ENCODE measurements at regions of chr5 and their contacts with region 1.

Region 1: GRCh38 chr5:65481635-65482295 is at the start of gene ADAMTS6:
- DNase-seq: peak in 1 of 2 experiments; percentile 67
- H3K4me3 ChIP-seq: peak within 1 kb of the TSS; percentile 50 to 79 (median 60)
- H3K27ac ChIP-seq: peak within 1 kb of the TSS; percentile 84
- H3K4me1 ChIP-seq: peaks cover 0 to 11% (median 6%) of the 10 kb centered on the region in 4 experiments; a peak in 4 of 7 replicates
- H3K27me3 ChIP-seq: no peaks in the 10 kb centered on the region
- CTCF ChIP-seq: no peak
- EP300 ChIP-seq: no peak
- POLR2A ChIP-seq: peak in 1 of 2 experiments; percentile 69; a peak in 2 of 3 replicates
- RAD21 ChIP-seq: peak in 1 of 2 experiments; percentile 10; a peak in 1 of 4 replicates
- total RNA-seq, gene ADAMTS6: 1.7 and 2.4 TPM in 2 replicates

Region 2: DNA sequence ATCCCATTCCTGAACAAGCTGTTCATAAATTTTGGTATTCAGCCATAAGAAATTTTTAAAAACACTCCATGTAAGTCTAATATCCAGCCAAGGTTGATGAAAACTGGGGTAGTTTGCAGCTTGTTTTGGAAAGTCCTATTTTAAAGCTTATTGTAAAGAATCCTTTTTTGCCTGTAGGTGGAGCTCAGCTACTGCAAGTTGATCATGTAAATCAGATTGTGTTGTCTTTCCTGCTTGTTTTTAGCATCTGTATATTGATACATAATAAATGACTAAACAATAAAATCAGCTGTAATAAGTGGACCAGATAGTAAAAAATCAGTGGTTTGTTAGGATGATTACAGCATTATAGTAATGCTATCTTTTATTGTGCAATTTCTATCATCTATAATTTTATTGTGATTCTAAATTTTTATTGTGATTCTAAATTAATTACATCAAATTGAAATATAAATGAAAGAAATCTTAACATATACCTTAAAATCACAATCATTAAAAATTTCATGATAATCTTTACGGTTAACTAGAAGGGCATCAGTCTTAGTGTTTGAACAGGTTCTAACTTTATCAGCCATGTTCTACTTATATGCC is 670.6 kb before region 1 on chr5:
- CTCF ChIA-PET with region 1: interaction called, 13 read pairs
- POLR2A ChIA-PET with region 1: no interaction called
- DNase-seq: no peak
- H3K4me3 ChIP-seq: no peak overlapping the region
- H3K27ac ChIP-seq: no peak overlapping the region
- H3K4me1 ChIP-seq: no peaks in the 10 kb centered on the region
- H3K27me3 ChIP-seq: no peaks in the 10 kb centered on the region
- CTCF ChIP-seq: peak in 2 of 3 experiments; percentile 45 to 59; a peak in 2 of 4 replicates
- EP300 ChIP-seq: no peak
- POLR2A ChIP-seq: no peak
- RAD21 ChIP-seq: peak; percentile 82 to 85

Region 3: DNA sequence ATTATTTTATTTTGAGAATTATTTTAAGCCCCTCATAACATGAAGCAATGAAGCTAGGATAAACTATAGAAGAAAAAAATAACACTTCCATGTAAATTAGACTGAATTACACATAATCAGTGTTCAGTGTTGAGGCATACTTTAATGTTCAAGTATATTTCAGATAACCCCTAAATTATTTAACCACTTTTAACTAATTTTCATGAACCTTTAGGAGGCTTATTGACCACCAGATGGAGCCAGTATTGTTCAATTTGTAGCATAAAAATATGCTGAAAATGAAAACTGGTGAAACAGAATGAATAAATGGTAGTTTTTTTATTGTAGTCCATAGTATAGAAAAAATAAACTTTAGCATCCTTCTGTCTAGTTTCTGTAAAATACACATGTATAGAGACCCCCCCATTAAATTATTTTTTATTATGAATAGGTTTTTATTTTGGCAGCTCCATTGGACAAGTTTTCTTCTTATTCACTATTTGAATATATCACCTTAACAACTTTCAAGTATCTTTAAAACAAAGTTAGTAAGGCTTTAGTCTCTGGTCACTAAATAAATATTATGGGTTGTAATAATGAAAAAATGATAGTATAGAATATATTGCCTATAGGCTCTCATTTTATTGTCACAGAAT is 522.9 kb before region 1 on chr5:
- CTCF ChIA-PET with region 1: interaction called, 14 read pairs
- POLR2A ChIA-PET with region 1: no interaction called
- DNase-seq: no peak
- H3K4me3 ChIP-seq: no peak overlapping the region
- H3K27ac ChIP-seq: no peak overlapping the region
- H3K4me1 ChIP-seq: no peaks in the 10 kb centered on the region
- H3K27me3 ChIP-seq: no peaks in the 10 kb centered on the region
- CTCF ChIP-seq: peak in 1 of 3 experiments; percentile 20; a peak in 2 of 4 replicates
- EP300 ChIP-seq: no peak
- POLR2A ChIP-seq: no peak
- RAD21 ChIP-seq: peak in 1 of 2 experiments; percentile 36; a peak in 2 of 4 replicates

Region 4: GRCh38 chr5:65035211-65036206 is 446.3 kb before region 1 on chr5:
- CTCF ChIA-PET with region 1: interaction called, 14 read pairs
- POLR2A ChIA-PET with region 1: no interaction called
- DNase-seq: peak; percentile 81 to 93
- H3K4me3 ChIP-seq: peak overlapping the region; percentile 57 to 67 (median 63)
- H3K27ac ChIP-seq: peak overlapping the region; percentile 90
- H3K4me1 ChIP-seq: peaks cover 2 to 10% (median 4%) of the 10 kb centered on the region in 4 experiments
- H3K27me3 ChIP-seq: peaks cover 0 to 3% (median 0%) of the 10 kb centered on the region in 4 experiments; a peak in 2 of 7 replicates
- CTCF ChIP-seq: no peak
- EP300 ChIP-seq: 0 out of 3 replicates have a peak, but pooled peaks of 1 of the 2 experiments have one; percentile 45
- POLR2A ChIP-seq: peak; percentile 73 to 77
- RAD21 ChIP-seq: 0 out of 4 replicates have a peak, but pooled peaks of 1 of the 2 experiments have one; percentile 7

Region 5: DNA sequence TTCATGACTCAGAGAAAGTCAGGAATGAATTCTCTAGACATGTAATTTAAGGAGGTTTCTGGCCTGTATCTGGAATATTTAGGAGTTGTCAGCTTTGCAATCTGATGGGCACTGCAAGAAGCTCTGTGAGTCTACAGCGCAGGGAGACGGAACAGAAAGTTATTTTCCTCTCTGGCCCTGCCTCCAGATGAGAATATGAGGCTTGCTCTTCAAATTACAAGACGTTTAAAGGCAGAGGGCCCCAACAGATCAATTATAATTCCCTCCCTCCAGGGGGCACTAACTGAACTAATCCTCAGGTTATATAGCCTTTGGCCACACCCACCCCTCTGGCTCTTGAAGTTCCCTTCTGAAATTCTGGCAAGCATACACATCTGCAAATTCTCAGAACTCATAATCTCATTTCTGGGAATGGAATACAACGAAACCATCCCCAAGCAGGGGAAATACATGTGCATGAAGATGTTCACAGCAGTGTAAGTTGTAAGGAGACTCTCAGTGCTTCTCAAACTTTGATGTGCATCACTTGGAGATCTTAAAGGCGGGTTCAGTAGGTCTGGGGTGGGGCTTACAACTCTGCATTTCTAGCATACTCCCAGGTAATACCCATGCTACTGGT is 405.4 kb before region 1 on chr5:
- CTCF ChIA-PET with region 1: interaction called, 13 read pairs
- POLR2A ChIA-PET with region 1: no interaction called
- DNase-seq: peak in 1 of 2 experiments; percentile 53
- H3K4me3 ChIP-seq: no peak overlapping the region
- H3K27ac ChIP-seq: no peak overlapping the region
- H3K4me1 ChIP-seq: peaks cover 0 to 9% (median 3%) of the 10 kb centered on the region in 4 experiments; a peak in 2 of 7 replicates
- H3K27me3 ChIP-seq: no peaks in the 10 kb centered on the region
- CTCF ChIP-seq: peak in 2 of 3 experiments; percentile 24 to 28; a peak in 3 of 4 replicates
- EP300 ChIP-seq: no peak
- POLR2A ChIP-seq: no peak
- RAD21 ChIP-seq: peak; percentile 31 to 49; a peak in 3 of 4 replicates

Region 6: DNA sequence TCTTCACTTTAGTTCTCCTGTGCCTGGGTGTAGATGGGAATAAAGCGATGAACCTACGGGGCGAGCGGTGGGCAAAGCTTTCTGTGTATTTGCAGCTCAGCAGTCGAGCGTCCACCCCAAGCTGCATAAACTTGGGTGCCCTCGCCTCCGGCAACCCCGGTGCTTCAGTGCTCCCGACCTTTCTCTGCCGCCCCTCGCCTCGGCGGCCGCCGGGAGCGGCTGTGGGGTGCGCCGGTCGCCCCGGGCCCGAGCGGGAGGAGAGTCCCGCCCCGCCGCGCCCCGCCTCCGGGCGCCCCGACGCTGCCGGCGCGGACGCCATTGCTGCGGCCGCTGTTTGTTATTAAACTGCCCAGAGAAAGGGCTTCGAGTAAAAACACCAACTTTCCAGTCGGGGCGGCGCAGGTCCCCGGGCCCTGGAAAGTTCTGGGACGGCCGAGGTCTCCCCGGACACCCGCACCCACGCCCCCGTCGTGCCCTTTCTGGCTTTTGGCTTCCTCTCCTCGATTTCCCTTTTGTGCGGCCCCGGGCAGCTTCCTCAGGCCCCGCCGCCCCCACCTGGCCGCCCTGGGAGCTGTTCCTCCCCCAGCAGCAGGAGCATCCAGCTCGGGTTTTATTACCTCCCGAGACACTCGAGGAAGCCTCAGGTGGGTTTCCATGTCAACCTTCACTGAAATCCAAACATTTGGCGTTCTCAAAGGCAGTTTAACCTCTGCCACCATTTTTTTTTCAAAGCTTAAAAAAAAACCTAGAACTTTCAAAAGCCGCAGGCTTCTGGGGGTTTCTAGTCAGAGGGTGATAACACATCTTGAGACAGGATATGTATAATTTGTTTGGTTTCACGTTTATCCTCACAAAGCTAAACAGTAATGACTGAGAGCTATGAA is 378.7 kb before region 1 on chr5:
- CTCF ChIA-PET with region 1: interaction called, 63 read pairs
- POLR2A ChIA-PET with region 1: interaction called, 7 read pairs
- DNase-seq: peak in 1 of 2 experiments; percentile 75
- H3K4me3 ChIP-seq: peak overlapping the region; percentile 14 to 55 (median 26); a peak in 6 of 8 replicates
- H3K27ac ChIP-seq: peak overlapping the region; percentile 71; the same call in 1 of the 2 replicates
- H3K4me1 ChIP-seq: peaks cover 4 to 6% (median 5%) of the 10 kb centered on the region in 4 experiments; a peak in 6 of 7 replicates
- H3K27me3 ChIP-seq: no peaks in the 10 kb centered on the region
- CTCF ChIP-seq: no peak
- EP300 ChIP-seq: no peak
- POLR2A ChIP-seq: peak in 1 of 2 experiments; percentile 49; a peak in 2 of 3 replicates
- RAD21 ChIP-seq: no peak

Region 7: DNA sequence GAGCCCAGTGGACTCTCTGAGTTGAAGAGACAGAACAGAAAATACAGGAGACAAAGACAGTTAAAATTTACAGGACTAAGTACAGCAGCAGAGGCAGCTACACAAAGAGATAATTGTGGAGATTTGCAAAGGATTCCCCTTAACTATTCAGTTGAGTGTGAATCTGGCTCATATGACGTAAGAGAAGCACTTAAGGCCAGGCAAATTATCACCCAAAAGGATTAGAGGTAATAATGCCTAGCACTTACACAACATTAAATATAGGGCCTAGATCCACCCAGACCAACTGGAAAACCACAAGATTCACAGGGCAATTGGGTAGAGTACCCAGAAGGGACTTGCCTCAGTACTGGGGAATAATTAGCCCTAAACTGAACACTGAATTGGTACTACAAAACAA is 41.3 kb before region 1 on chr5:
- CTCF ChIA-PET with region 1: no interaction called
- POLR2A ChIA-PET with region 1: no interaction called
- DNase-seq: no peak
- H3K4me3 ChIP-seq: no peak overlapping the region
- H3K27ac ChIP-seq: no peak overlapping the region
- H3K4me1 ChIP-seq: no peaks in the 10 kb centered on the region
- H3K27me3 ChIP-seq: no peaks in the 10 kb centered on the region
- CTCF ChIP-seq: no peak
- EP300 ChIP-seq: no peak
- POLR2A ChIP-seq: no peak
- RAD21 ChIP-seq: no peak

Measured in H1 (cell line).